ENCODE measurements at regions of chr21 and their contacts with region 1.

Region 1: DNA sequence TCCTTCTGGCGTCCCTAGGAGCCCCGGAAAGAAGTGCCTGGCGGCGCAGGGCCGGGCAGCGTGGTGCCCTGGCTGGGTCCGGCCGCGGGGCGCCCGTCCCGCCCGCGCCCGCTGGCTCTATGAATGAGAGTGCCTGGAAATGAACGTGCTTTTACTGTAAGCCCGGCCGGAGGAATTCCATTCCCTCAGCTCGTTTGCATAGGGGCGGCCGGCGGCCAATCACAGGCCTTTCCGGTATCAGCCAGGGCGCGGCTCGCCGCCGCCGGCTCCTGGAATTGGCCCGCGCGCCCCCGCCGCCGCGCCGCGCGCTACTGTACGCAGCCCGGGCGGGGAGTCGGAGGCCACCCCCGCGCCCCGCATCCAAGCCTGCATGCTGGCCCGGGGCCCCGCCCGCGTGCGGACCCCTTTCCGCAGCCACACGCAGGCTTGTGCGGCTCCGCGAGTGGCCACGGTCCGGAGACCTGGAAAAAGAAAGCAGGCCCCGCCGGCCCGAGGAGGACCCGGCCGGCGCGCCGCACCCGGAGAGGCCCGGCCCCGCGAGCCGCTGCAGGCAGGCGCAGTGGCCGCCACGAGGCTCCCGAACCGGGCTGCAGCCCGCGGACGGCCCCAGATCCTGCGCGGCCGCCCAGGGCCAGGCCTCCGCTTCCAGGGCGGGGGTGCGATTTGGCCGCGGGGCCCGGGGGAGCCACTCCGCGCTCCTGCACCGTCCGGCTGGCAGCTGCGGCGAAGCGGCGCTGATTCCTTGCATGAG is 160.4 kb downstream of the RUNX1 start:
- DNase-seq: peak; percentile 90 to 93
- ATAC-seq: peak; percentile 85 to 95 (median 89)
- H3K4me3 ChIP-seq: peak overlapping the region; percentile 53 to 76 (median 68)
- H3K27ac ChIP-seq: peak overlapping the region; percentile 77 to 99 (median 92)
- H3K4me1 ChIP-seq: peaks cover 0 to 49% (median 25%) of the 10 kb centered on the region in 9 donors
- H3K27me3 ChIP-seq: peaks cover 3 to 86% (median 78%) of the 10 kb centered on the region in 7 donors
- CTCF ChIP-seq: peak in 1 of 9 donors; percentile 2

Region 2: DNA sequence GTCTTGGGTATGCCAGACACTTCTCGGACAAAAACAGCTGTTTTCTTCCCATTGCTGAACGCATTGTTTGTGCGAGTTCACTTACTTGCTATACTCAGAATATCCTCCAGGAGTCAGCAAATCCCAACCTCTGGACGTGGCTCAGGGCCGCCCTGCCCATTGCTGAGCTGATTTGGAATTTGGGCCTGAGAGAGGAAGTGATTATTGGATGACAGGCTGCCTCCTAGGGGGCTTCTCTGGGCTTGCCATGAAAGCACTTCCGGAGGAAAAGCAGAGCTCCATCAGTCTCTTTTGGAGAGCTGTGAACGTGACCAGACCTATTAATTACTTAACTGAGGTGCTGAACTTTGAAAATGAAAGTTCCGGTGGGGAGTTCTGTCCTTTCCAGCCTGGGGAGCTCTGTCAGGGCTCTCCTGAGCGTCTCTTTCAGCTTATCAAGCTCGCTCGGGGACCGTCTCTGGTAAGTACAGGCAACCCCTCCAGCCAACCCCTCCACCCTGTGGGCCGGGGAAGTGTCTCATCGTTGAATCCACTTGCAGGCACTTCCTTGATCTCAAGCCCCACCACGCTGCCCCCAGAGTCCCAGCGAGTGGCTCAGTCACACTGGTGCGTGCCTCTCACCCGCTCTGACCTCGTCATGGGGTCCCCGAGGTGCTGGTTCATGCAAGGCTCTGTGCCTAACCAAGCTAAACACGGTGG is 143.0 kb before region 1 on chr21:
- intact Hi-C with region 1: loop called in 1 of 10 experiments (anchors 5 kb)
- DNase-seq: peak; percentile 47 to 72
- ATAC-seq: peak; percentile 83 to 96 (median 92)
- H3K4me3 ChIP-seq: peak overlapping the region in 8 of 10 donors; percentile 8 to 47 (median 36)
- H3K27ac ChIP-seq: peak overlapping the region in 5 of 10 donors; percentile 16 to 54 (median 32)
- H3K4me1 ChIP-seq: peaks cover 0 to 12% (median 3%) of the 10 kb centered on the region in 9 donors
- H3K27me3 ChIP-seq: peaks cover 0 to 30% (median 14%) of the 10 kb centered on the region in 7 donors
- CTCF ChIP-seq: peak; percentile 65 to 88 (median 83)

Region 3: DNA sequence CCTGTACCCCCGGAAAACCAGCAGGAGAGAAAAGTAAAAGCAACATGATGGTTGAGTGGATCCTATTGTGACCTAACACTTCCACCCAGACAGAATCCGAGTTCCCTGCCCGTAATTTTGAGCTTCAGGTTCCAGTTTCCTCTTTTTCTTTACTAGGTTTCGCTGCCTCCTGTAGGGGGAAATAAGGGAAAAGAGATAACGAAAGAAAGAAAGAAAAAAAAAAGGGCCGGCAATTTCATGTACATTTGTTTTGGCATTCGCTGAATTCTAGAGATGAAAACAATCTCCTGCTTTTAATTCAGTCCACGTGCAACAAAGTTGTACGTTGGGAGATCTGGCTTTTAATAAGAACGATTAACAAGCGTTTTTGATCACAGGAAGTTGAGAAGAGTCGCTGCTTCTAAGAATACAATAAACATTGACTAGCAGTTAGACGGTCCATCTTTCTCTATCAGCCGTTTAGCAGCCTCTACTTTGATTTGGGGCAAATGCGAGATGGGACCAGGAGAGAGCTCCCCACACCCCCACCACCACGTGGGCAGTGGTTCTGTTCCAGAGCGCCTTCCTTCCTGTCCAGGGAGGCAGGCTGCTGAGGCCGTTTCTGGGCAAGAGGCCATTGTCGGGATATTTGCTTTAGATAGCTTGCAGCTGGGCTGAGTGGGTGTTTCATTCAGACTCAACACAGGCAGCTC is 316.3 kb after region 1 on chr21:
- intact Hi-C with region 1: loop called in 2 of 10 experiments (anchors 5 to 10 kb)
- DNase-seq: peak; percentile 67 to 88
- ATAC-seq: peak; percentile 69 to 92 (median 79)
- H3K4me3 ChIP-seq: peak overlapping the region in 8 of 10 donors; percentile 4 to 42 (median 14)
- H3K27ac ChIP-seq: peak overlapping the region; percentile 0 to 84 (median 76)
- H3K4me1 ChIP-seq: peaks cover 6 to 71% (median 42%) of the 10 kb centered on the region in 9 donors
- H3K27me3 ChIP-seq: no peaks in the 10 kb centered on the region
- CTCF ChIP-seq: peak in 2 of 9 donors; percentile 8 to 22

Region 4: GRCh38 chr21:35390013-35390776 is 501.5 kb after region 1 on chr21:
- intact Hi-C with region 1: loop called in 2 of 10 experiments (anchors 5 to 10 kb)
- DNase-seq: no peak
- ATAC-seq: no peak
- H3K4me3 ChIP-seq: no peak overlapping the region
- H3K27ac ChIP-seq: no peak overlapping the region
- H3K4me1 ChIP-seq: peaks cover 0 to 3% (median 0%) of the 10 kb centered on the region in 9 donors
- H3K27me3 ChIP-seq: peaks cover 0 to 4% (median 0%) of the 10 kb centered on the region in 7 donors
- CTCF ChIP-seq: no peak

Region 5: DNA sequence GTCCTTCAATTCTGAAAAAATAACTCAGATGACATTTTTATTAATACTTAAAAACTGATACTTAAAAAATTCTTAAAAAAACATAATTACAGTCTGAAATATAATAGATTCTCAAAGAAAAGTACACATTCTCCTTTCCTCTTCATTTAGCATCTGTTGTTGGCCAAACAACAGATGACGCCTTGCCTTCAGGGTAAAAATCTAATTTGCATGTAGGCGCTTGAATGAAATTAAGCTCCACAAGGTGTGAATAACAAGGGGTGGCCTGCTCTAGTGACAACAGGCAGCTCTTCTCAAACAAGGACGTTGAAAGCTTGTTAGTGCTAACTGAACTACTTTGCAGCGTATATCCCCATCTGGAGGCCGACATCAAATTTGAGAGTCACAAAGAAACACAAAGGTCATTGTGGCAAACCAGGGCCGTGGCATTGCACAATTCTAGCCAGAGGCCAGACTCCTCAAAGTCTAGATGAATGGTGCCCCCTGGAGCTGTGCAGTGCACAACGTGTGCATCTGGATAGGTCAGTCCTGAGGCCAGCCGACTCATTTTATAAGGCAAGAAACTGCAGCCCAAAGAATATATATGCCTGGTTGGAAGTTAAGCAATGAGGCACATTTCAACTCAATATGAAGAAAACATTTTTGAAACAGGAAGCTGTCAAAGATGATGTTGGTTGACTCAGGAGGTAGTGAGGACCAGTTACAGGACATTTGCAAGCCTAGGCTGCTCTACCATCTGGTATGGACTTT is 619.6 kb after region 1 on chr21:
- intact Hi-C with region 1: loop called in 2 of 10 experiments (anchors 5 kb)
- DNase-seq: peak; percentile 50 to 54
- ATAC-seq: peak; percentile 67 to 86 (median 78)
- H3K4me3 ChIP-seq: no peak overlapping the region
- H3K27ac ChIP-seq: peak overlapping the region in 4 of 10 donors; percentile 15 to 85 (median 46)
- H3K4me1 ChIP-seq: peaks cover 0 to 52% (median 0%) of the 10 kb centered on the region in 9 donors
- H3K27me3 ChIP-seq: peaks cover 0 to 33% (median 17%) of the 10 kb centered on the region in 7 donors
- CTCF ChIP-seq: peak in 5 of 9 donors; percentile 32 to 55 (median 40)

Region 6: DNA sequence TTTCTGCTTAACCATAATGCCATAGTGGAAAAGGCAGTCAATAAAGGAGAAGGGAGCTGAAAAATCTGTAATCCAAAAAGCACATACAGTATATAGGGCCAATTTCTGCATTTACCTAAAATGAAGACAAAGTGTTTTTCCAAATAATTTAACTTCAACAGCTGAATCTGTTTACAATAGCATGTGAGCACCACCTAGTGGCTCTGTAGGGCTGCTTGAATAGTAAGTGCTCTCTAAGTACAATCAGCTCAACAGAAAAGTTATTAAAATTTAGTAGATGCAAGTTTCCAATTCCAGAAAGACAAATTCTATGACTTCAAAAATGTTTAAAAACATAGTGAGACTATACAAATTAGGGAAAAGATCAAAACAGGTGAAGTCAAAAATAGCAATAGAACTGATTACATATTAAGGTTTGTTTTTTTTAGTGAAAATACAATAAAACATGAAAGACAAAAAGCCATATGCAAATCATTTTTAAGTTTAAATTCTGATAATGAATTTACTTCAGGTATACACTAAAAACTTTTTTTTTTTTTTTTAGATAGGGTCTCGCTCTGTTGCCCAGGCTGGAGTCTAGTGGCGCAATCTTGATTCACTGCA is 951.6 kb after region 1 on chr21:
- intact Hi-C with region 1: loop called in 3 of 10 experiments (anchors 5 to 10 kb)
- DNase-seq: peak in 1 of 2 donors; percentile 67
- ATAC-seq: peak in 7 of 8 donors; percentile 42 to 81 (median 63)
- H3K4me3 ChIP-seq: no peak overlapping the region
- H3K27ac ChIP-seq: no peak overlapping the region
- H3K4me1 ChIP-seq: peaks cover 0 to 12% (median 2%) of the 10 kb centered on the region in 9 donors
- H3K27me3 ChIP-seq: peaks cover 0 to 5% (median 0%) of the 10 kb centered on the region in 7 donors
- CTCF ChIP-seq: peak; percentile 65 to 91 (median 83)

Region 7: DNA sequence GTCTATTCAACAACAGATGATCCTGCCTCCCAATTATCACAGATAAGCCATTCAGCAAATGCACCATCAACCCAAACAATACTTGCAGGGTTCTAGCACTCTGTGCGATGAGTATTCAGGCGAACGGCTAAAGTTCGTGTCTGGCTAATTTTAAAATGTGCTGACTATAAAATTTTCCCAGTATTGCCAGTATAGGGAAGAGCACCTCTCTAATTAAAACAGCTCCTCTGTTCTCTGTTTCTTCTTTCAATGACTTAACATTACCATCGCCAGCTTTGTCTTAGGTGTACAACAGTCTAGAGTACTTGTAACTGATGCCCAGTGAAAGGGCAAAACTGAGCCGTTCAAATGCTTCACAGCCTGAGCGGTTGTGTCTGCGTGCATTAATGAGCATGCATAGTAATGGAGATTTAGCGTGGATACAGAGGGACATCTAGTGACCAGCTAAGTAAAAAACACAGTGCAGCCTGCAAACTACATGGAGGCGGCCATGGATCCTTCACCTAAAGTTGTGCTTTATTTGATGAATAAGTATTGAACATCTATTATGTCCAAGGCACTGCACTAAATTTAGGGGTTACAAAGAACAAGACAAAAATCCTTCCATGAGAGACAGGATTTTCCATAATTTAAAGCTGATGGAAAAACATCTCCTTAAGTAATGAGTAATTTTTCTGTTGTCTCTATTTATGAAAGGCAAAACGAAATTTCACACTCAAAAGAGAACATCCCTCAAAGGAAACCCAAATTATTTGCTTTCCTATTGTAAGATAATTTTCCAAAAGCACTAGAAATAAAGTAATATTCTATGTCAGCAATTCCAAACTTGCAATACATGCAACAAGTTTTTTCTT is 1051.6 kb after region 1 on chr21:
- intact Hi-C with region 1: loop called in 4 of 10 experiments (anchors 5 to 10 kb)
- DNase-seq: peak in 1 of 2 donors; percentile 50
- ATAC-seq: peak; percentile 88 to 99 (median 94)
- H3K4me3 ChIP-seq: peak overlapping the region in 1 of 10 donors; percentile 11
- H3K27ac ChIP-seq: peak overlapping the region in 3 of 10 donors; percentile 3 to 26 (median 26)
- H3K4me1 ChIP-seq: peaks cover 0 to 10% (median 5%) of the 10 kb centered on the region in 9 donors
- H3K27me3 ChIP-seq: peaks cover 0 to 4% (median 0%) of the 10 kb centered on the region in 7 donors
- CTCF ChIP-seq: peak; percentile 23 to 77 (median 67)

Measured in heart right ventricle (tissue), 16 donors.